HEK293 (cell line): ENCODE measurements at regions of chr14 and their contacts with region 1.

Region 1: DNA sequence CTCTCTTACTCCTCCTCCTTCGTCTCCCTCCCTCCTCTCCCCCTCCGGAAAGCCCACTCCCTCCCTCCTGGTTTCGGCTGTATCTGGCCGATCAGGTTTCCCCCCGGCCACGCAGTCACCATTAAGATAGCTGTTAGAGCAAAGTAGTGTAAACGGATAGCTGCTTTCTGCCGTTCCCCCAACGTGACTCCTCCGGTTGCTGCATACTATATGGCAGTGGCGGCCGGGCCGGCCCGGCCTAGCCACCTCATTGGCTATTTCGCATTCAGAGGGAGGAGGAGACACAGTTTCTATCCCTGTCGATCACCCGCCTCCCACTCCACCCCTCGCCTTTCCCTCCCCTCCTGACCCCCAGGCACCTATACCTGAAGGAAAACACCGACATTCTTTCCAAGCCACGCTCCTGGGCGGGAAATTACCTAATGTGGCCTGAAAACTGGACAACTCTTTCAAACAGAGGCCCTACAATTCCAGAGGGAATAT is at the start of gene SIX4:
- H3K4me3 ChIP-seq: peak within 1 kb of the TSS; percentile 96
- H3K27ac ChIP-seq: peak within 1 kb of the TSS; percentile 99
- H3K4me1 ChIP-seq: peaks cover 12% of the 10 kb centered on the region
- CTCF ChIP-seq: no peak

Region 2: GRCh38 chr14:60648934-60649874 is 75.0 kb before region 1 on chr14 and contains the start of gene SIX1:
- CTCF ChIA-PET with region 1: interaction called, 3 read pairs
- POLR2A ChIA-PET with region 1: interaction called, 62 read pairs
- H3K4me3 ChIP-seq: peak within 1 kb of the TSS; percentile 72
- H3K27ac ChIP-seq: peak within 1 kb of the TSS; percentile 97
- H3K4me1 ChIP-seq: peaks cover 50% of the 10 kb centered on the region
- CTCF ChIP-seq: no peak

Region 3: DNA sequence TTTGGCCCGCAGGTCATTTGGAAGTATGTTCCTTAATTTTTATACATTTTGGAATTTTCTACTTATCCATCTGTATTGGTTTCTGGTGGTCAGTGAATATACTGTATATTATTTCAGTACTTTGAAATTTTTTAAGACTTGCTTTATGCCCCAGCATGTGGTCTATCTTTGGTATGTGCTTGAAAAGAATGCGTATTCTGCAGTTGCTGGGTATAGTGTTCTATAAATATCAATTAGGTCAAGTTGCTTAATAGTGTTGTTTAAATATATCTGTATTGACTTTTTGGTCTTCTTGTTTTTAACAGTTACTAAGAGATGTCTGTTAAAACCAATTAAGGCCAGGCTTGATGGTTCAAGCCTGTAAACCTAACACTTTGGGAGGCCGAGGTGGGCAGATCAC is 53.2 kb before region 1 on chr14:
- CTCF ChIA-PET with region 1: no interaction called
- POLR2A ChIA-PET with region 1: no interaction called
- H3K4me3 ChIP-seq: no peak overlapping the region
- H3K27ac ChIP-seq: no peak overlapping the region
- H3K4me1 ChIP-seq: no peaks in the 10 kb centered on the region
- CTCF ChIP-seq: no peak

Region 4: DNA sequence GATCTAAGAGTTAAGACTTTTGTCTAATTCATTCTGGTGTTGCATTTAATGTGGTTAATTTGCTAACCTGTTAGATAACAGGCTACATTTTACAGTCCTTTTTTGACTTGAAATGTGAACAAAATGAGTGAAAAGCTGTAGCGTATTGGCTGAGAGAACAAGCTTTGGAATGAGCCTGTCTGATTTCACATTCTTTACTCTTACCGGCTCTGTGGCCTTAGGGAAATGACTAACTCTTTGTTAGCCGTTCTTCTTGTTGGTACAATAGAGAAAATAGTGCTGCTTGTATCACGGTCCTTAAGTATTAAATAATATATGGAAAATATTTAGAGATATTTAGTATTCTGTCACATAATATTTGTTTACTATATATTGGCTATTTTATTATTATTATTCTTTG is 12.3 kb after region 1 on chr14:
- CTCF ChIA-PET with region 1: interaction called, 3 read pairs
- POLR2A ChIA-PET with region 1: interaction called, 14 read pairs
- H3K4me3 ChIP-seq: peak overlapping the region; percentile 71
- H3K27ac ChIP-seq: no peak overlapping the region
- H3K4me1 ChIP-seq: no peaks in the 10 kb centered on the region
- CTCF ChIP-seq: no peak

Region 5: DNA sequence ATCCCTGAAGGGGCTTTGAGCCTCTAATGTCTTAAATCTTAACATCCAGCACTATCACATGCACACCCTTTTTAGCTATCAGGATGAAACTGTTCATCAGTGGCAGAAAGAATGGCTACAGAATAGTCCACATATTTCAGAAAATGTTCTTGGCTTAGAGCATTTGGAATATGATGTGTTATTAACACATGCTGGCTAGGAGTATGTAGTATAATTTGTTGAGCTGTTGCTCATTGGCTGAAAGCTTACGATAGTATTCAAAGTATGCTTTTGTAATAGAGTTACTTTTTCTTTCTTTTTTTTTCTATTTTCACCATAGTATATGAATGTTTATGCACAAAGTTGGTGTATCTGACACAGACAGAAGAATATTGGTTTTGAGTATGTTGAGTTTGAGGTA is 65.5 kb after region 1 on chr14:
- CTCF ChIA-PET with region 1: no interaction called
- POLR2A ChIA-PET with region 1: no interaction called
- H3K4me3 ChIP-seq: no peak overlapping the region
- H3K27ac ChIP-seq: no peak overlapping the region
- H3K4me1 ChIP-seq: no peaks in the 10 kb centered on the region
- CTCF ChIP-seq: no peak

Region 6: DNA sequence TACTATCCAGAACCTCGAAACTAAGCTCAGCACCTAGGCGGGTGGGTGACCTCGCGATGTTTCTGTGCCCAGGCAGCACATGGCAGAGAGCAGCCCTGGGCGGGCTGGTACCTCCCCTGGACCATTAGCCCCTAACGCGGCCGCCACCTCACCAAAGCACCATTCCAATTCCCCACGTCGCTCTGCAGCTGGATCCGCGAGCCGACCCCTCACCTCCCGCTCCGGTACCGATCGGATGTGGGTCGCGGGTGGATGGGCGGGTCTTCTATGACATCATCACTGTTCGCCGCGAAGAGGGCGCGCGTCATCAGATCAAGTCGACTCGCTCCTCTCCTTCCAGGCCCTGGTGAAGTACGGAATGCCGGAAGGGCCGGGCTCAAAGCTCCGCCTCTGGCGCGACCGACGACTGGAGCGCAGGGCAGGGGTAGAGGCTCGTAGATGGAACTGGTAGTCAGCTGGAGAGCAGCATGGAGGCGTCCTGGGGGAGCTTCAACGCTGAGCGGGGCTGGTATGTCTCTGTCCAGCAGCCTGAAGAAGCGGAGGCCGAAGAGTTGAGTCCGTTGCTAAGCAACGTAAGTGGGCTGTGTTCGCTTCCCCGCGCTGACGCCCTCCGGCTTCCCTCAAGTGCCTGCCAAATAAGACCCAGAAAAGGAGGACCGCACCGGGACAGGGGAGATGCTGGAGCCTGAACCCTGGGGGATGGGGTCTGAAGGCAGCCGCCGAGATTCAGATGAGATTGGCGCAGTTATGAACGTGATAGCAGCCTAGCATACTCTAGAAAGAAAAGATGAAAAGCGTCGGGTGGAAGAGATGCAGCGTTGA is 256.8 kb after region 1 on chr14 and contains the starts of genes SLC38A6 and TRMT5:
- CTCF ChIA-PET with region 1: no interaction called
- POLR2A ChIA-PET with region 1: interaction called, 15 read pairs
- H3K4me3 ChIP-seq: peak within 1 kb of the TSS; percentile 93
- H3K27ac ChIP-seq: peak within 1 kb of the TSS; percentile 81
- H3K4me1 ChIP-seq: peaks cover 4% of the 10 kb centered on the region; the same call in 1 of the 2 replicates
- CTCF ChIP-seq: no peak